ENCODE measurements at regions of chr12 and their contacts with region 1.

Region 1: DNA sequence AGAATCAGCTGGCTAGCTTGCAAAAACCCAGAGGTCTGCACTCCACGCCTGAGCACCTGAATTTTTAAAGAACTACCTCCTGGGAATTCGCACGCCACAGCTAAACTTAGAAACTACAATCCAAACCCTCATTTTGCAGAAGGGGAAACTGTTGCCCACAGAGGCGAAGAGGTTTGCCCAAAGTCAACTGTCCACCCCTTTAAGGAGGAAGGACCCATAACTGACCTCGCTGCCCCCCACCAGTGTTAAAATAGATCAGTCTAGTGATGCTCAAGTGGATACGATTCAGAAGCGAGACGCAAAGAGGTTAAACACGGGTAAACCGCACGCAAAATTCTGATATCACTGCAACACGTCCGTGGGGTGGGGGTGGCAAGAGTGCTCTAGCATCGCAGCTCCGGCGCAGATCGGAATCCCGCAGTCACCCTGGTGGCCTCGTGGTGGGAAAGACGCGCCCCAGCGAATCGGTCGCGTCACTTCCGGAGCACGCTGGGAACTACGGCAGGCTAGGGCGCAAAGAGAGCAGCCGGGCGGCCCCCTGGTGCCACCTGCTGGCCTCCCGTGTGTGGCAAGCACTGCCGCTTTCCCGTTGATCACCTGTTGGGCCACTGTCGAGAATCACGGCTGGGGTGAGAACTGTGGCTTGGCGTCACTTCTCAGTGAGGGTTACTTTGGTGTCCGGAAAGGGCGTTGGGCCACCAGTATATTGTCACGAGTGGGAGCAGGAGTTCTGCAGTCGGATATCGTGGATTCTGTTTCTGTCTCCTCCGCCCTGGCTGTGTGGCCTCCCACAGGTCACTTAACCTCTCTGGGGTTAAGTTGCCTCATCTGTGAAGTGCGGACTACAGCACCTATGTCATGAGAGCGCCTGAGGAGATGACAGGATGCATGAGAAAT is at the start of gene ALKBH2:
- DNase-seq: peak; percentile 97
- ATAC-seq: peak; percentile 55
- H3K4me3 ChIP-seq: peak within 1 kb of the TSS; percentile 62
- H3K27ac ChIP-seq: peak within 1 kb of the TSS; percentile 27
- H3K4me1 ChIP-seq: peaks cover 39% of the 10 kb centered on the region
- H3K27me3 ChIP-seq: no peaks in the 10 kb centered on the region
- CTCF ChIP-seq: peak; percentile 93
- total RNA-seq, gene ALKBH2: 73.8 and 74.0 TPM in 2 replicates

Region 2: DNA sequence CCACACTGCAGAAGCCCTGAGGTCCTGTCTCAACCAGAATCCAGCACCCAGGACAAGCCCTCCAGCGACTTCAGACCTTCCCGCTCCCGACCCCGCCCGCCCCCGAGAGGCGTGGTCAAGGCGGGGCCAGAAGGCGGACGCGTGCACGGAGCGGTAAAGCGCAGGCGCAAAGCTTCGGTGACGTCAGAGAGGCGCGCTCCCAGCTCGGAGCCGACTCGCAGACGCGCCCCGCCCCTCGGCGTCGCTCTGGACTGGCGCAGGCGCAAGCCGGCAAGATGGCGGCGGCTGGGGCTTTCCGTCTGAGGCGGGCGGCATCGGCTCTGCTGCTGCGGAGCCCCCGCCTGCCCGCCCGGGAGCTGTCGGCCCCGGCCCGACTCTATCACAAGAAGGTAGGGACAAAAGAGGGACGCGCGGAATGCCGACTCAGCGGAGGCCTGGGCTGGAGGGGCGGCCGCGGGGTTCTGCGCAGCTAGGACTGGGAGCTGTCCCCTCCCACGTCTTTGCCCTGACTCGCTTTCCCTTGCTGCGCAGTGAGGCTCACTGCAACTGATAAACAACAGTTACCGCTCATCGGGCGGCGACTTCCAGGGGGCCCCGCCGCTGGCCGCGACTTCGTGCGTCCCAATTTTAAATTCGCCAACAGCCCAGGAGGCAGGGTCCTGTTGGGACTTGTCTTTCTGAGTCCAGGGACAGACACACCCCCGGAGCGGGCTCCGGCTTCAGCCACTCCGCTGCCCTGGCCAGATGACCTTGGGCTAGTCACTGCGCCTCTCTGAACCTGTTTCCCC is 530.7 kb before region 1 on chr12 and contains the start of gene ISCU:
- CTCF ChIA-PET with region 1: no interaction called
- POLR2A ChIA-PET with region 1: no interaction called
- intact Hi-C with region 1: loop called (anchors 2 kb)
- DNase-seq: peak; percentile 99
- ATAC-seq: peak; percentile 67
- H3K4me3 ChIP-seq: peak within 1 kb of the TSS; percentile 90
- H3K27ac ChIP-seq: peak within 1 kb of the TSS; percentile 74
- H3K4me1 ChIP-seq: peaks cover 38% of the 10 kb centered on the region
- H3K27me3 ChIP-seq: no peaks in the 10 kb centered on the region
- CTCF ChIP-seq: no peak
- total RNA-seq, gene ISCU: 120 and 181 TPM in 2 replicates

Region 3: DNA sequence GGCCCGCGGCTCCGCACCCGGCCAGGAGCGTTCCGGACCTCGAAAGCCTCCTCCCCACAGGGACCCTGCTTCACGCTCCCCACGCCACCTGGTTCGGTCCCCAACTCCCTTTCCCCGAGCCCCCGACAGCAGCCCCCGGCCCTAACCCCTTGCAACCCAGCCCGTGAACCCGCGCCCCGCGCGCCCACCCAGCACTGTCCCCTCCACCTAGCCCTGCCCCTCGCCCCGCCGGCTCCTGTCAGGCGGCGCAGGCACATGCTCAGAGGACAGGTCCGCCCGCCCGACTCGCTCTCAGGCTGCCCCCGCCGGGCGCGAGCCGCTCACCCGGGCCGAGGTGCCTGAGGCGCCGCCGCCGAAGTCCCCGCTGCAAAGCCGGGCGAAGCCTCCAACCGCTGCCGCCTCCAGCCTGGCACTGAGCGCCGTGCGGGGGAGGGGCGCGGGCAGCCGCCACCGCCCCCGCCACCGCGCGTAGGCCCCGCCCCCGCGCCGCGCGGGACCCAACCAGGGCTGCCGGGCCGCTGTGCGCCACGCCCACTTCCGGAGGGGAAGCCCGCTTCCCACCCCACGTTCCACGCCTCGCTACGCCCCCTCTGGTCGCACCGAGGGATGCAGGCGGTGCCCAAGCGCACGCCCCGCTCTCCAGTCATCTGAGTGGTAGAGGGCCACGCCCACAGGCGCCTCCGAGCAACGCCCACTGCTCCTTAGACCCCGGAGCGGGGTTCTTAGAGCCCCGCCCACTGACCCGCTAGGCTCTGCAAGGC is 362.0 kb before region 1 on chr12 and contains the start of gene CORO1C:
- CTCF ChIA-PET with region 1: no interaction called
- POLR2A ChIA-PET with region 1: no interaction called
- intact Hi-C with region 1: loop called (anchors 10 kb)
- DNase-seq: peak; percentile 99
- ATAC-seq: peak; percentile 53
- H3K4me3 ChIP-seq: peak within 1 kb of the TSS; percentile 68
- H3K27ac ChIP-seq: peak within 1 kb of the TSS; percentile 87
- H3K4me1 ChIP-seq: peaks cover 57% of the 10 kb centered on the region
- H3K27me3 ChIP-seq: no peaks in the 10 kb centered on the region
- CTCF ChIP-seq: peak; percentile 83
- total RNA-seq, gene CORO1C: 159 and 179 TPM in 2 replicates

Region 4: DNA sequence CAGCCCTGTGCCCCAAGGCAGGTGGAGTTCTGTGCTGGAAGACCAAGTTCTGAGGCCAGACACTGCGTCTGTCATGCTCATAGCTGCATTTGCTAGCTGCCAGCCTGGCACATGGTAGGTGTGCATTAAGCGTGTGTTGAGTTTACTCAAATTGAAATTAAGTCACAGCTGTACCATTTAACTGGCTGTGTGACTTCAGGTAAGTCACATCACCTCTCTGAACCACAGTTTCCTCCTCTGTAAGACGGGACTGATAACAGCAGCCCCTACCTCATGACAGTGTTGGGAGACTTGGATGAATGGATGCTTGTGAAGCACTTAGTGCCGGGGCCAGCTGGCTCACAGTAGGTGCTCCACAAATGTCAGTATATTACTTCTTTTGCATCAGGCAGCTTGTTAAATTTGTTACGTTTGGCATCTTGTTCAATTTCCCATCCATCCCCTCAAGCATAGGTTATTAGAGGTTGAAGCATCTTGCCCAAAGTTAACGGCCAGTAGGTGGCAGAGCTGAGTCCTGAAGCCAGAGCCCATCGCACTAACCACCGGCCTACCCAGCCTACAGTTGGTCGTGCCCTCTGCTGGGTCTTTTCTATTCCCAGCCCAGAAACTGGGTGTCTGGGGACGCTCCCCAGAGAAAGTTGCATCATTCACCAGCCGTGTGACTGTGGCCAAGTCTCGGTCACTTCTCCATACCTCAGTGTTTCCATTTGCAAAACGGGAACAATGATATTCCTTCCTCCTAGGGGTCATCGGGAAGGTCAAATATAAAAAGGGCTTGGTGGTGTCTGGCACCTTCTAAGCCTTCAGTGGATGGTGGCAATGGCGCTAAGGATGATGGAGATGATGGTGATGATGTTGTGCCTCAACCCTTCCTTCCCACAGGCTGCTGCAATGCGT is 208.9 kb before region 1 on chr12:
- CTCF ChIA-PET with region 1: no interaction called
- POLR2A ChIA-PET with region 1: no interaction called
- intact Hi-C with region 1: loop called (anchors 1 kb)
- DNase-seq: peak; percentile 76
- ATAC-seq: peak; percentile 71
- H3K4me3 ChIP-seq: no peak overlapping the region
- H3K27ac ChIP-seq: no peak overlapping the region
- H3K4me1 ChIP-seq: no peaks in the 10 kb centered on the region
- H3K27me3 ChIP-seq: 0 out of 2 replicates have a peak, but pooled peaks cover 12% of the 10 kb centered on the region
- CTCF ChIP-seq: peak; percentile 90

Region 5: GRCh38 chr12:109052414-109053323 is 40.6 kb before region 1 on chr12 and contains the start of gene USP30:
- CTCF ChIA-PET with region 1: interaction called, 3 read pairs
- POLR2A ChIA-PET with region 1: no interaction called
- intact Hi-C with region 1: loop called (anchors 2 kb)
- DNase-seq: peak; percentile 86
- ATAC-seq: peak; percentile 91
- H3K4me3 ChIP-seq: peak within 1 kb of the TSS; percentile 96
- H3K27ac ChIP-seq: no peak within 1 kb of the TSS
- H3K4me1 ChIP-seq: peaks cover 16% of the 10 kb centered on the region
- H3K27me3 ChIP-seq: no peaks in the 10 kb centered on the region
- CTCF ChIP-seq: no peak
- total RNA-seq, gene USP30: 8.5 and 13.6 TPM in 2 replicates

Region 6: DNA sequence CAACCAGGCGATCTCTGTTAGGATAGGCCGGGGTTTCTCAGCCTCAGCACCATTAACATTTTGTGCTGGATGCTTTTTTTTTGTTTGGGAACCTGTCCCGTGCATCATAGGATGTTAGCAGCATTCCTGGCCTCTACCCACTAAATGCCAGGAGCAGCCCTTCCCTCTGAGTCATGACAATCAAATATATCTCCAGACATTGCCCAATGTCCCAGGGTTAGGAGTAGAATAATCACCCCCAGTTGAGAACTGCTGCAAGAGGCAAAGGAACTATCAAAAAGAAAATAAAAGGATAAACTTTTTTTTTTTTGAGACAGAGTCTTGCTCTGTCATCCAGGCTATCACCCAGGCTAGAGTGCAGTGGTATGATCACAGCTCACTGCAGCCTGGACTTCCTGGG is 99.1 kb after region 1 on chr12:
- CTCF ChIA-PET with region 1: no interaction called
- POLR2A ChIA-PET with region 1: no interaction called
- intact Hi-C with region 1: loop called (anchors 1 kb)
- DNase-seq: peak; percentile 98
- ATAC-seq: peak; percentile 81
- H3K4me3 ChIP-seq: peak overlapping the region; percentile 45; the same call in 1 of the 2 replicates
- H3K27ac ChIP-seq: peak overlapping the region; percentile 96
- H3K4me1 ChIP-seq: peaks cover 40% of the 10 kb centered on the region
- H3K27me3 ChIP-seq: no peaks in the 10 kb centered on the region
- CTCF ChIP-seq: no peak

Measured in PC-3 (cell line).